A549 (cell line): ENCODE measurements at regions of chr19 and their contacts with region 1.

Region 1: GRCh38 chr19:1070576-1070930 is 3.6 kb downstream of the ARHGAP45 start:
- DNase-seq: no peak
- ATAC-seq: no peak
- H3K4me3 ChIP-seq: no peak overlapping the region
- H3K27ac ChIP-seq: no peak overlapping the region
- H3K4me1 ChIP-seq: peaks cover 31% of the 10 kb centered on the region
- CTCF ChIP-seq: no peak
- EP300 ChIP-seq: no peak
- POLR2A ChIP-seq: no peak
- RAD21 ChIP-seq: no peak

Region 2: GRCh38 chr19:980133-980998 is 90.2 kb before region 1 on chr19:
- CTCF ChIA-PET with region 1: no interaction called
- POLR2A ChIA-PET with region 1: no interaction called
- DNase-seq: peak in 1 of 2 experiments; percentile 56
- ATAC-seq: peak in 1 of 2 experiments; percentile 8; a peak in 1 of 6 replicates
- H3K4me3 ChIP-seq: no peak overlapping the region
- H3K27ac ChIP-seq: peak overlapping the region in 1 of 2 experiments; percentile 70; a peak in 3 of 6 replicates
- H3K4me1 ChIP-seq: peaks cover 25% of the 10 kb centered on the region
- CTCF ChIP-seq: no peak
- EP300 ChIP-seq: no peak
- POLR2A ChIP-seq: no peak
- RAD21 ChIP-seq: no peak

Region 3: GRCh38 chr19:1057176-1057855 is 13.2 kb before region 1 on chr19:
- CTCF ChIA-PET with region 1: interaction called, 18 read pairs
- POLR2A ChIA-PET with region 1: no interaction called
- DNase-seq: peak in 1 of 2 experiments; percentile 58
- ATAC-seq: peak; percentile 81 to 84
- H3K4me3 ChIP-seq: no peak overlapping the region
- H3K27ac ChIP-seq: no peak overlapping the region
- H3K4me1 ChIP-seq: no peaks in the 10 kb centered on the region
- CTCF ChIP-seq: peak; percentile 52
- EP300 ChIP-seq: no peak
- POLR2A ChIP-seq: no peak
- RAD21 ChIP-seq: peak; percentile 53 to 60